GM18951 (cell line): ENCODE measurements at regions of chr12 and their contacts with region 1.

Region 1: GRCh38 chr12:82627569-82628198 is 59.0 kb upstream of the TMTC2 start:
- POLR2A ChIP-seq: no peak

Region 2: DNA sequence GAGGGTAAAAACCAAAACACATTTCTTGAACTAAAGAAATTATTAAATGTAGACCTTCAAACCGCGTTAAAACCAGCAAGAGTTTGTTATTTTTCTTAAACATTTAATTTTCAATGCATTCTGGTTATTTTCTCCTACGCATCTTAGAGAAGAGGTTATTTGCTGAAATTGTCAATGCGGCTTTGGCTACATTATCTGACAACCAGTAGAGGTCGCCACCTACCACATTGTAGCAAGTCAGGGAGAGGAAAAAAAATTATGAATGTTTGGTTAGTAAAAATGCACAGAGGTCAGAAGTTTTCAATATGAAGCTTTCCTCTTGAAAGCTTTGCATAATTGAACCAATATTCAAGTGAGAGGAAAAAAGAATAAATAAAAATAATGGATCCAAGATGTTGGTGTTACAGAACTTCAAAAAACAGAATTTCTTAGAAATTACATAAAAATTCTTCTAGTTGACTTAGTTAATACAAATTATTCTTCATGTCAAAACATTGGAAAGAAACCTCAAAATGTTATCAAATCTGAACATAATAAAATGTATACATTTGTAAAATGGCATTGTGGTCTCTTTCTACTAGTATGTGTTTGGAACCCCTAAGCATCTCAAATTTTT is 100.4 kb before region 1 on chr12:
- in situ Hi-C with region 1: loop called (anchors 10 kb)
- POLR2A ChIP-seq: no peak